Activated CD8-positive, alpha-beta T cell treated with anti-CD3 and anti-CD28 coated beads for 36 hours (primary cell): ENCODE measurements at regions of chr16 and their contacts with region 1.

Region 1: GRCh38 chr16:88437373-88437964 is 15.6 kb upstream of the ZFPM1 start:
- DNase-seq: peak; percentile 74
- ATAC-seq: peak; percentile 89
- H3K4me3 Mint-ChIP-seq: no peak overlapping the region
- H3K27ac Mint-ChIP-seq: no peak overlapping the region
- H3K4me1 Mint-ChIP-seq: no peaks in the 10 kb centered on the region
- H3K27me3 Mint-ChIP-seq: no peaks in the 10 kb centered on the region
- CTCF ChIP-seq: peak; percentile 91

Region 2: GRCh38 chr16:88287219-88287618 is 150.2 kb before region 1 on chr16:
- CTCF ChIA-PET with region 1: interaction called, 15 read pairs
- POLR2A ChIA-PET with region 1: no interaction called
- intact Hi-C with region 1: no loop called
- DNase-seq: peak; percentile 77
- ATAC-seq: peak; percentile 73
- H3K4me3 Mint-ChIP-seq: no peak overlapping the region
- H3K27ac Mint-ChIP-seq: no peak overlapping the region
- H3K4me1 Mint-ChIP-seq: no peaks in the 10 kb centered on the region
- H3K27me3 Mint-ChIP-seq: no peaks in the 10 kb centered on the region
- CTCF ChIP-seq: peak; percentile 74

Region 3: DNA sequence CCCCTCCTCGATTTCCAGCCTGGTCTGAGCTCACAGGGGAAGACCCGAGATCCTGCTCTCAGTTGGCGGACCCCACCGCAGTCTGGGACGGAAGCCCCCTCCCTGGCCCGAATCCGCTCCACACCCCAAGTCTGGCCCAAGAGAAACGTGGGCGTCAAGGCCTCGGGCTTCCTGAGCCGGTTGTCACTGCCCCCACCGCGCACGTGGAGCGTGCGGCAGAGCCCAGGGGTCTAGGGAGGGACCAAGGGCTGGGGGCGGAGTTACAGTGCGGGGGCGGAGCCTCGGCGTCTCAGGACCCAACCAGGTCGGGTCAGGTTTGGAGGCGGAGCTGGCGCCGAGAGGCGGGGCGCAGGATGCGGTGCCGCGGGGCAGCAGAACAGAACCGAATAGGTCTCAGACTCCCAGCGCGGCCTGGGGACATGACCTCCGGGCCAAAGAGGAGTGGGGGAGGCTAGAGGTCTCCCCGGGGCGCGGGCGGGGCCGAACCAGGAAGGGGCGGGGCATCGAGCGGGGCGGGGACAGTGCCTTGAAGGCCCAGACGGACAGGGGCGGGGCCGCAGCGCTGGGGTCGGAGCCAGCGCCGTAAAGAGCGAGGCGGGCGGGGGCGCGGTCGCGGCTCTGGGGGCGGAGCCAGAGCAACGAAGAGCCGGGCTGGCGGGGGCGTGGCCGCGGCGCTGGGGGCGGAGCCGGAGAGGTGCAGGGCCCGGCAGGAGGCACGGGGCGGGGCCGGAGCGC is 15.2 kb after region 1 on chr16:
- CTCF ChIA-PET with region 1: interaction called, 34 read pairs
- POLR2A ChIA-PET with region 1: no interaction called
- intact Hi-C with region 1: no loop called
- DNase-seq: peak; percentile 99
- ATAC-seq: peak; percentile 71
- H3K4me3 Mint-ChIP-seq: peak overlapping the region; percentile 76
- H3K27ac Mint-ChIP-seq: peak overlapping the region; percentile 90
- H3K4me1 Mint-ChIP-seq: peaks cover 24% of the 10 kb centered on the region
- H3K27me3 Mint-ChIP-seq: no peaks in the 10 kb centered on the region
- CTCF ChIP-seq: no peak

Region 4: GRCh38 chr16:88561485-88562369 is 124.3 kb after region 1 on chr16:
- CTCF ChIA-PET with region 1: interaction called, 25 read pairs
- POLR2A ChIA-PET with region 1: interaction called, 3 read pairs
- intact Hi-C with region 1: loop called (anchors 2 kb)
- DNase-seq: peak; percentile 58
- ATAC-seq: peak; percentile 69
- H3K4me3 Mint-ChIP-seq: no peak overlapping the region
- H3K27ac Mint-ChIP-seq: no peak overlapping the region
- H3K4me1 Mint-ChIP-seq: peaks cover 13% of the 10 kb centered on the region
- H3K27me3 Mint-ChIP-seq: peaks cover 2% of the 10 kb centered on the region
- CTCF ChIP-seq: peak; percentile 40